ENCODE measurements at regions of chr1 and their contacts with region 1.

Region 1: DNA sequence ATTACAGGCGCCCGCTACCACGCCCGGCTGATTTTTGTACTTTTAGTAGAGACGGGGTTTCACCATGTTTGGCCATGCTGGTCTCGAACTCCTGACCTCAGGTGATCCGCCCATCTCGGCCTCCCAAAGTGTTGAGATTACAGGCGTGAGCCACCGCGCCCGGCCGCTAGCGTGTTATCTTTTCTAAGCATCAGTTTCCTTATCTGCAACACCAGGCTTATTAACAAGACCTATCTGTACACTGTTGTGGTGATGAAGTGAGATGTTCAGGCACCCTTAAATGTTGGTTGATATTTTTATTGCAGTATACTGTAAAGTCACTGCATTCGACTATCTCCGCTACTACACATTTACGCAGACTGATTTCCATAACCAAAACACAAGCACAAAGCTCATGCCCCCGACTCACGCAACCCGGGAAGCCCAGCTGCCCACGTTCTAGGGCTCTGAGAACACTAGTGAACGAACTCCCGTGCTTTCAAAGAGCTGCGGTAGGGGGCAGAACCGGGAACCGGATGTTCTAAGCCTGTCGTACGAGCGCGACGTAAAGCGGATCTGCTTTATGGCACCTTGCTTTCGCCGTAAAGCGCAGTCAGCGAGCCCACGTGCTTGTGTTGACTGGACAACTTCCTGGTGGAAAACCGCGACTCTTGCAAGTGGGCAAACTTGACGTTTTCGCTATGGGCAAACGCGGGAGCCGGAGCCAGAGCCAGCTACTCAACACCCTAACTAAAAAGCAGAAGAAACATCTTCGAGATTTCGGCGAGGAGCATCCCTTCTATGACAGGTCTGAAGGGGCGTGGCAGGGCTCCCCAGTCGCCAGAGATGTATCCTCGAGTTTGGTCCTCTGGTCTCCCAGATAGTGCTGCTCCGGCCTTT is at the start of gene UTP25:
- DNase-seq: peak; percentile 96
- ATAC-seq: peak; percentile 88
- H3K4me3 ChIP-seq: peak within 1 kb of the TSS; percentile 75 to 83
- H3K27ac ChIP-seq: peak within 1 kb of the TSS; percentile 71
- H3K4me1 ChIP-seq: peaks cover 0 to 23% of the 10 kb centered on the region in 2 experiments; a peak in 2 of 4 replicates
- H3K27me3 ChIP-seq: no peaks in the 10 kb centered on the region
- CTCF ChIP-seq: peak; percentile 36 to 70 (median 59); a peak in 5 of 6 replicates
- POLR2A ChIP-seq: peak; percentile 89
- RAD21 ChIP-seq: no peak
- total RNA-seq, gene UTP25: 12.7 TPM

Region 2: DNA sequence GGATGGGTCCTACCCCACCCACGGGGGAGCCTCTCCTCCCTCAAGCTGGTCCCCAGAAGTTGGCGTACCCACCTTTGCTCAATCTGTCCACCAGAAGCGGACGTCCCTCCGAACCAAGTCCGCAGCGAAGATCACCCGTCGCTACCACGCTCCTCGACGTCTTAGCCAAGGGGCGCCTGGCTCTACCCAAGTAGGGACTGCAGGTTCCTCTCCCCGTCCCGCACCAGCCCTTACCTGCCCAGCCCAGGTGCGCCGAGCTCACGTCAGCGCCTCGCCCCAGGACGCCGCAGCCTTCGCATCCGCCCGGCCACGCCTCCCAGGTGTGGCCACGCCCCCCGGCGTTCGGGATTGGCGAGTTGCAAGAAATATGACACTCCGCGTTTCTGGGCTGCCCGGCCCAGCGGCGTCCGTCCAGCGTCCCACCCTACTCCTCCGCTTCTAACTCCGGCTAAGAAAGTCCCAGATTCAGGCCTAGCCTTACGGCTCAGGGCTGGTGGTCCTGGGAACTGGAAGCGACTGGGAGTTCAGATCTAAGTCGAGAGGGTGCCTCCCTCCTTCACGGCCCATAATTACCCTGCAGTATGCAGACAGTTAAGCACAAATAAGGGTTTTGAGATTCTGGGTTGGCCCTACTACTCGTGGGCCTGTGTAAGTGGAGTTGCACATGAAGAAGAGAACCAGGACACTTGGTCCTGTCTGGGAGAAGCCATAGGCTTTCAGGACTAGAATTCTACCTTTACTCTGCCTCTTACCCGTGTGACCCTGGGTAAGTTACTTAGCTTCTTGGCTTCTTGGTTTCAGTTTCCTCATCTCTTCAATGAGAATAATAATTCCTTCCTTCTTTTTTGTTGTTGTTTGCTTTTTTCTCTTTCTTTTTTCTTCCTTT is 21.5 kb before region 1 on chr1 and contains the start of gene IRF6:
- CTCF ChIA-PET with region 1: interaction called, 13 read pairs
- POLR2A ChIA-PET with region 1: interaction called, 9 read pairs
- RAD21 ChIA-PET with region 1: no interaction called
- intact Hi-C with region 1: no loop called
- DNase-seq: peak; percentile 88
- ATAC-seq: peak; percentile 92
- H3K4me3 ChIP-seq: peak within 1 kb of the TSS; percentile 80 to 91
- H3K27ac ChIP-seq: peak within 1 kb of the TSS; percentile 64
- H3K4me1 ChIP-seq: peaks cover 11 to 38% of the 10 kb centered on the region in 2 experiments
- H3K27me3 ChIP-seq: no peaks in the 10 kb centered on the region
- CTCF ChIP-seq: no peak
- POLR2A ChIP-seq: peak; percentile 75
- RAD21 ChIP-seq: no peak
- total RNA-seq, gene IRF6: 35.2 TPM

Region 3: GRCh38 chr1:209815931-209816341 is 11.7 kb before region 1 on chr1:
- CTCF ChIA-PET with region 1: interaction called, 14 read pairs
- POLR2A ChIA-PET with region 1: interaction called, 6 read pairs
- RAD21 ChIA-PET with region 1: no interaction called
- intact Hi-C with region 1: no loop called
- DNase-seq: no peak
- ATAC-seq: 0 out of 2 replicates have a peak, but pooled peaks have one; percentile 14
- H3K4me3 ChIP-seq: no peak overlapping the region
- H3K27ac ChIP-seq: no peak overlapping the region
- H3K4me1 ChIP-seq: 0 out of 4 replicates have a peak, but pooled peaks cover 0 to 7% of the 10 kb centered on the region in 2 experiments
- H3K27me3 ChIP-seq: no peaks in the 10 kb centered on the region; the same call in 1 of the 2 replicates
- CTCF ChIP-seq: no peak
- POLR2A ChIP-seq: no peak
- RAD21 ChIP-seq: no peak

Region 4: DNA sequence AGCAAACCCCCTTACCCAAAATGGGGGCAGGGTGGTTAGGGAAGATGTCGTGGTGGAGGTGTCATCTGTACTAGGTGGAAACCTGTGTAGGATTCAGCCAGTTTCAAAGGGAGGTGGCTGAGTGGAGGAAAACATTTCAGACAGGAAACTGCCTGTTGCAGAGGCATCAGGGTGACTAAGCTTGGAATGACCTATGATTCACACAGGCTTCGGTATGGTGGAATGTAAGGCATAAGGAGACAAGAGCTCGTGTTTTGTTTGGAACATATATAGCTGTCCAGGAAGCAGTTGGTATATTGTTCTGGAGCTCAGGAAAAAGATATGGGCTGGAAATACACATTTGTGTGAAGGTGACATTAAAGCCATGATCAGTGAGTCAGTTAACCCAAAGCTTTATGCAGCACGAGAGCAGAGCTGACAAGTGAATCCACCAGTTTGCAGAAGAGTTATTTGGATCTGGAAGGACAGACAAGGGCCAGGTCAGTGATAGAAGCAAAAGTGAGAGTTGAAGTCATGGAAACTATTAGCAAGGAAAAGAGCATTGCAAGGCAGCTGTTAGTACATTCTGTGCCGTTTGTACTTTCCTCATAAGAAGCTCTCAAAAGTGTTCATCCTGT is 12.4 kb after region 1 on chr1:
- CTCF ChIA-PET with region 1: interaction called, 7 read pairs
- POLR2A ChIA-PET with region 1: interaction called, 10 read pairs
- RAD21 ChIA-PET with region 1: no interaction called
- intact Hi-C with region 1: no loop called
- DNase-seq: peak; percentile 65
- ATAC-seq: peak; percentile 91
- H3K4me3 ChIP-seq: peak overlapping the region in 1 of 2 experiments; percentile 32; a peak in 2 of 4 replicates
- H3K27ac ChIP-seq: peak overlapping the region; percentile 20; the same call in 1 of the 2 replicates
- H3K4me1 ChIP-seq: peaks cover 5 to 37% of the 10 kb centered on the region in 2 experiments; a peak in 3 of 4 replicates
- H3K27me3 ChIP-seq: no peaks in the 10 kb centered on the region
- CTCF ChIP-seq: no peak
- POLR2A ChIP-seq: no peak
- RAD21 ChIP-seq: no peak

Region 5: GRCh38 chr1:209937996-209938959 is 110.7 kb after region 1 on chr1 and contains the start of gene SYT14:
- CTCF ChIA-PET with region 1: no interaction called
- POLR2A ChIA-PET with region 1: no interaction called
- RAD21 ChIA-PET with region 1: no interaction called
- intact Hi-C with region 1: no loop called
- DNase-seq: no peak
- ATAC-seq: no peak
- H3K4me3 ChIP-seq: no peak within 1 kb of the TSS
- H3K27ac ChIP-seq: no peak within 1 kb of the TSS
- H3K4me1 ChIP-seq: no peaks in the 10 kb centered on the region
- H3K27me3 ChIP-seq: peaks cover 52% of the 10 kb centered on the region
- CTCF ChIP-seq: no peak
- POLR2A ChIP-seq: no peak
- RAD21 ChIP-seq: no peak
- total RNA-seq, gene SYT14: 0.07 TPM